Transverse colon (tissue), 4 donors: ENCODE measurements at regions of chr1 and their contacts with region 1.

Region 1: DNA sequence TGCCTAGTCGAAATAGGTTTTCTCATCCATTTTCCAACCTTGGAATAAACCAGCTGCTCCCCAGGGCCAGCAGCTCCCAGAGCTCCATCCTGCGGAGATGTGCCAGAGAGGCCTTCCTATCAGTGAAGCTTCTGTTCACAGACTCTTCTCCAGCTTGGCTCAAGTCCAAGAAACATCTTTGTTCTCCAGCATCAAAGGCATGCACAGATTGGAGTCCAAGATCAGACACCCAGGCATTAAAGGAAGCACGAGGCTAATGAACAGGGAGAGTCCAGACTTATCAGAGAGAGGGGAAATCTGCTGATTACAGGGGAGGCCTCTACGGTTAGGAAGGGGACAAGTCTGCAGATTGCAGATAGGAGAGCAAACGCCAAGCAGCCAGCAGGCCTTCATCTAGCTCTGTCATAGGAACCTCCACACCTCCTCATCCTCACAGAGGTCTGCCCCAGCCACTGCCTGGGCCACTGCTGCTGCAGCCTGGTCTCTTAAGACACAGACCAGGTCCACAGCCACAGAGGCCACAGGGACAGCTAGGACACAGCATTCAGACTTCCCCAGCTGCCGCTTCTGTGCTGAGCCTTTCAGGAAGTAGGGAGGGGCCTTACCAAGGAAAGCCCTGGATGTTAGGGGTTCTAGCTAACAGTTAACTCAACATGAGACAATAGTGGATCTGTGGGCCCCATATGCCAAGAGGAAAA is 3.4 kb downstream of the PRR9 start:
- DNase-seq: no peak
- H3K4me3 ChIP-seq: no peak overlapping the region
- H3K27ac ChIP-seq: no peak overlapping the region
- H3K4me1 ChIP-seq: no peaks in the 10 kb centered on the region
- H3K27me3 ChIP-seq: peaks cover 4% of the 10 kb centered on the region
- CTCF ChIP-seq: no peak
- EP300 ChIP-seq: no peak
- POLR2A ChIP-seq: no peak

Region 2: GRCh38 chr1:152654110-152654509 is 566.6 kb before region 1 on chr1:
- in situ Hi-C with region 1: no loop called
- intact Hi-C with region 1: loop called (anchors 10 kb)
- DNase-seq: peak; percentile 35
- H3K4me3 ChIP-seq: no peak overlapping the region
- H3K27ac ChIP-seq: no peak overlapping the region
- H3K4me1 ChIP-seq: no peaks in the 10 kb centered on the region
- H3K27me3 ChIP-seq: no peaks in the 10 kb centered on the region
- CTCF ChIP-seq: peak; percentile 36 to 63 (median 53)
- EP300 ChIP-seq: no peak
- POLR2A ChIP-seq: no peak

Region 3: GRCh38 chr1:152869808-152870419 is 350.8 kb before region 1 on chr1:
- in situ Hi-C with region 1: loop called in 1 of 4 experiments (anchors 25 kb)
- intact Hi-C with region 1: no loop called
- DNase-seq: peak; percentile 60
- H3K4me3 ChIP-seq: no peak overlapping the region
- H3K27ac ChIP-seq: no peak overlapping the region
- H3K4me1 ChIP-seq: no peaks in the 10 kb centered on the region
- H3K27me3 ChIP-seq: no peaks in the 10 kb centered on the region
- CTCF ChIP-seq: peak; percentile 58 to 78 (median 73)
- EP300 ChIP-seq: no peak
- POLR2A ChIP-seq: no peak

Region 4: GRCh38 chr1:153100236-153100635 is 120.5 kb before region 1 on chr1:
- in situ Hi-C with region 1: no loop called
- intact Hi-C with region 1: no loop called
- DNase-seq: no peak
- H3K4me3 ChIP-seq: no peak overlapping the region
- H3K27ac ChIP-seq: no peak overlapping the region
- H3K4me1 ChIP-seq: no peaks in the 10 kb centered on the region
- H3K27me3 ChIP-seq: no peaks in the 10 kb centered on the region
- CTCF ChIP-seq: no peak
- EP300 ChIP-seq: no peak
- POLR2A ChIP-seq: no peak